Thyroid gland (tissue), 4 donors: ENCODE measurements at regions of chr1 and their contacts with region 1.

Region 1: DNA sequence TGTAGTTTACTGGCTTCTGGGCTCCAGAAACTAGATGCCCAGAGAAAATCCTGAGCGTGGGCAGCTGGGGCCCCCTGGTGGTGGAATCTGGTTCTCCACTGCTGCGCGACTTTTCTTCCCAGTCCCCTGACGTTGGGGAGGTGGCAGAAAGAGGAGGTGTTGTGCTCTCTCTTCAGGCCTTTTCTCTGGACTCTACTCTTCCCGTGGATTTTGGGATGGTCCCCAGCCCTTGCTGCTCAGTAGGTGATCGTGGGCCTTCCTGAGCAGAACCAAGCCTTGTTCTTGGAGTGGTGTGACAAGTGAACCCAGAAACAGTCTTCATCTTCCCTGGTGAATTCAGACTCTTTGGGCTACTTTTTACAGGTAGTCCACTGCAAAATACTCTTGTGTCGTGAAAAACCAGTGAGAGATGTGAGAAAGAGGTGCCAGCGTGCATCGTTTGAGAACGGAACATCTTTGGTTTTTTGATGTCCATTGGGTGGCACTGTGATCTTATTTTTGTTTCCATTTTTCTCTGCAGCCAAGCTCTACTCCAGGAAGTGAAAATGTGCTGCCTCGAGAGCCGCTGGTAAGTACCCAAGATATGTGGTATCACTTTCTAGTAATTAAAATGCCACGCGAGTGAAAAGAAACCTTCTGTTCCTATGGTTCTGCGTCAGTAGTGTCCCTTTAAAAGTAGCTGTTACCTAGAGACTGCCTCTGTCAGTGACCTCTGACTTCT is 20.2 kb downstream of the PEX14 start:
- DNase-seq: peak; percentile 67 to 75
- H3K4me3 ChIP-seq: no peak overlapping the region
- H3K27ac ChIP-seq: peak overlapping the region in 2 of 3 donors; percentile 12 to 67
- H3K4me1 ChIP-seq: peaks cover 10 to 20% of the 10 kb centered on the region in 2 donors
- H3K27me3 ChIP-seq: no peaks in the 10 kb centered on the region
- CTCF ChIP-seq: peak; percentile 67 to 95 (median 84)
- POLR2A ChIP-seq: no peak

Region 2: DNA sequence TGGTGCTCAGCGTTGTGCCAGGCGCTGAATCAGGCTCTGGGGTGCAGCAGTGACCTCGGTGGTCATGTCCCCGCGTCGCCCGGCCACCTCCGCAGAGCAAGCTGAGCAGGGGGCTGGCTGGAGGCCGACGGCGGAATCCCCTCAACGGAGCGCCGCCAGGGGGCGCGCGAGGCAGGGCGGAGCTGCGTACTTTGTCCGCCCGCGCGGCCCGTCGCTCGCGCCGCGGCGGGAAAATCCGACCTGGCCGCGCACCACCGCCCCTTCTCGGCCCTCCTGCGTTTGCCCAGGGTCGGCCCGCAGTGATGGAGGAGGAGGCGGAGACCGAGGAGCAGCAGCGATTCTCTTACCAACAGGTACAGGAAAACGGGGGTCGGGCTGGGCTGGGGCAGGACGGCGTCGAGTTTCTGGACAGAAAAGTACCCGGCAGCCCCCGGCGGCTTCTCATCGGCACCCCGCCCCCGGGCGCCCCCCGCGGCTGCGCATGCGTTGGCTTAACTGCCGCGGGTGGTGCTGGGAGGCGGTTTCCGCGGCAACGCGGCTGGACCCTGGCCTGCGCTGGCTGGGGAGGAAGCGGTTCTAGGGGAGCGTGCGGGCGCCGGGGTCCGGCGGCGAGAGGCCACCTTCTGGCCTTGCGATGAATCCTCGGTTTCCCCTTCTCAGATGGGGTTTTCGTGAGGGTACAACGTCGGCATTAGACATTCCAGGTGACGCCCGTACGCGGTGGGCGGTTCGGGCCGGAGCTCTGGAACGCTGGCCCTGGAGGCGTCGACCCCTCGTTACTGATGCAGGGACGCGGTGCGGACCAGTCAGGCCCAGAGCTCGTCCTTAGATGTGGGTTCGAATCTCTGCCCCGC is 64.5 kb before region 1 on chr1 and contains the start of gene CENPS:
- intact Hi-C with region 1: loop called (anchors 5 kb)
- DNase-seq: peak; percentile 89 to 90
- H3K4me3 ChIP-seq: peak within 1 kb of the TSS; percentile 28 to 45 (median 35)
- H3K27ac ChIP-seq: peak within 1 kb of the TSS in 1 of 3 donors; percentile 25
- H3K4me1 ChIP-seq: peaks cover 8% of the 10 kb centered on the region in 2 donors
- H3K27me3 ChIP-seq: no peaks in the 10 kb centered on the region
- CTCF ChIP-seq: peak; percentile 73 to 99 (median 95)
- POLR2A ChIP-seq: peak in 1 of 2 donors; percentile 63
- total RNA-seq, gene CENPS: 5.8 to 22.4 (median 11.4) TPM

Region 3: DNA sequence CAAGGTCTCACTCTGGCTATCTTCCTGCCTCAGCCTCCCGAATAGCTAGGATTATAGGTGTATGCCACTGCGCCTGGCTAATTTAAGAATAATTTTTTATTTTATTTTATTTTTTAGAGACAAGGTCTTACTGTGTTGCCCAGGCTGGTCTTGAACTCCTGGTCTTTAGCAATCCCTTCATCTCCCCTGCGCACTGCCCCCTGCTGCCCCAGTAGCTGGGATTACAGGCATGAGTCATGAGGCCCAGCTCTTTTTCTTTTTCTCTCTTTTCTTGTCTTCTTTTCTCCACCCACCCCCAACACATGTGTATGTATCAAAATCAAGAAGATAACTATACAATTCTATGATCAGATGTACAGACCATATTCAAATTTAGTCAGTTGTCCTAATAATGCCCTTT is 67.0 kb after region 1 on chr1:
- intact Hi-C with region 1: no loop called
- DNase-seq: no peak
- H3K4me3 ChIP-seq: no peak overlapping the region
- H3K27ac ChIP-seq: no peak overlapping the region
- H3K4me1 ChIP-seq: peaks cover 0 to 16% of the 10 kb centered on the region in 2 donors
- H3K27me3 ChIP-seq: no peaks in the 10 kb centered on the region
- CTCF ChIP-seq: no peak
- POLR2A ChIP-seq: no peak

Region 4: DNA sequence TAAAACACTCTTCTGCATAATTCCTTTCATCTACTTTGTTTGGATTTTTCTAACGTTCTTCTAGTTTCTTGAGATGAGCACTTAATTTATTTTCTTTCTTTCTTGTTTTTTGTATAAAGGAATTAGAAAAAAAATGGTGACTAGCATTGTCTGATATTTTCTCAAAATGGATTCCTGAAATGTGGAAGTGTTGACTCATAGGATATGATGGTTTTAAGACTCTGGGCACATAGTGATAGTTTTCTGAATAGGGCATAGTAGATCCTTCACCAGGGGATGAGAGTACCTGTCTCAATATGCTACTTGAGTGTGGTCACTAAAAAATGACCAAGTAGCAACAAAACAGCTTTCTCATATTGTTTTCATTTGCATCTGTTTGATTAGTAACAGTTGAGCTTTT is 80.7 kb after region 1 on chr1:
- intact Hi-C with region 1: no loop called
- DNase-seq: no peak
- H3K4me3 ChIP-seq: no peak overlapping the region
- H3K27ac ChIP-seq: no peak overlapping the region
- H3K4me1 ChIP-seq: no peaks in the 10 kb centered on the region
- H3K27me3 ChIP-seq: no peaks in the 10 kb centered on the region
- CTCF ChIP-seq: no peak
- POLR2A ChIP-seq: no peak

Region 5: GRCh38 chr1:10867138-10867721 is 372.3 kb after region 1 on chr1:
- intact Hi-C with region 1: loop called (anchors 5 kb)
- DNase-seq: peak; percentile 58 to 61
- H3K4me3 ChIP-seq: no peak overlapping the region
- H3K27ac ChIP-seq: no peak overlapping the region
- H3K4me1 ChIP-seq: peaks cover 4 to 11% of the 10 kb centered on the region in 2 donors
- H3K27me3 ChIP-seq: no peaks in the 10 kb centered on the region
- CTCF ChIP-seq: peak in 5 of 6 experiments; percentile 51 to 94 (median 84)
- POLR2A ChIP-seq: no peak